ENCODE measurements at regions of chr1 and their contacts with region 1.

Region 1: GRCh38 chr1:36824390-36824861 is 209.9 kb downstream of the GRIK3 start:
- DNase-seq: no peak
- H3K4me3 ChIP-seq: no peak overlapping the region
- H3K27ac ChIP-seq: no peak overlapping the region
- H3K4me1 ChIP-seq: no peaks in the 10 kb centered on the region
- H3K27me3 ChIP-seq: no peaks in the 10 kb centered on the region
- CTCF ChIP-seq: no peak
- POLR2A ChIP-seq: no peak

Region 2: GRCh38 chr1:36851087-36851486 is 26.7 kb after region 1 on chr1:
- intact Hi-C with region 1: loop called (anchors 1 kb)
- DNase-seq: no peak
- H3K4me3 ChIP-seq: no peak overlapping the region
- H3K27ac ChIP-seq: no peak overlapping the region
- H3K4me1 ChIP-seq: no peaks in the 10 kb centered on the region
- H3K27me3 ChIP-seq: peaks cover 0 to 9% of the 10 kb centered on the region in 2 donors
- CTCF ChIP-seq: no peak
- POLR2A ChIP-seq: no peak